Posterior vena cava (tissue), 2 donors: ENCODE measurements at regions of chr12 and their contacts with region 1.

Region 1: GRCh38 chr12:102326987-102327386 is 129.4 kb upstream of the PMCH start:
- DNase-seq: no peak

Region 2: GRCh38 chr12:102305486-102305885 is 21.5 kb before region 1 on chr12:
- intact Hi-C with region 1: loop called in 1 of 2 experiments (anchors 1 kb)
- DNase-seq: no peak

Region 3: DNA sequence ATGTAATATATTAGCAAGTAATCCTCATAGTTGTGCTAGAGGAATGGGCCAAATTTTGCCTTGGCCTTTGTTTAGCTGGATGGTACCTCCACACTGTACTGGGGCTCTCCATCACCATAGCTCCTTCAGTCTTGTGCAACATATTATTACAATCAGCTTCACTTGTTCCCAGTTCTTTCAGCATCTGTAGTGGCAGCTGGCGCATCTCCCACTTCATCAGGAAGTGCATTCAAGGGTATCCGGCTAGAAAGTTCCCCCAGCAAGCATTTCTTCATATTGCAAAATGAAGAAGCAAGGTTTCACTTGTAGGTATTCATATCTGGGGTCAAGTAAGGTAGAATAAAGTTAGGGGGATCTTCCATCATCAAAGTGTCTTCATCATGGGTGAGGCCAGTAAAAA is 29.7 kb after region 1 on chr12:
- intact Hi-C with region 1: no loop called
- DNase-seq: no peak